Sigmoid colon (tissue), 7 donors: ENCODE measurements at regions of chr6 and their contacts with region 1.

Region 1: DNA sequence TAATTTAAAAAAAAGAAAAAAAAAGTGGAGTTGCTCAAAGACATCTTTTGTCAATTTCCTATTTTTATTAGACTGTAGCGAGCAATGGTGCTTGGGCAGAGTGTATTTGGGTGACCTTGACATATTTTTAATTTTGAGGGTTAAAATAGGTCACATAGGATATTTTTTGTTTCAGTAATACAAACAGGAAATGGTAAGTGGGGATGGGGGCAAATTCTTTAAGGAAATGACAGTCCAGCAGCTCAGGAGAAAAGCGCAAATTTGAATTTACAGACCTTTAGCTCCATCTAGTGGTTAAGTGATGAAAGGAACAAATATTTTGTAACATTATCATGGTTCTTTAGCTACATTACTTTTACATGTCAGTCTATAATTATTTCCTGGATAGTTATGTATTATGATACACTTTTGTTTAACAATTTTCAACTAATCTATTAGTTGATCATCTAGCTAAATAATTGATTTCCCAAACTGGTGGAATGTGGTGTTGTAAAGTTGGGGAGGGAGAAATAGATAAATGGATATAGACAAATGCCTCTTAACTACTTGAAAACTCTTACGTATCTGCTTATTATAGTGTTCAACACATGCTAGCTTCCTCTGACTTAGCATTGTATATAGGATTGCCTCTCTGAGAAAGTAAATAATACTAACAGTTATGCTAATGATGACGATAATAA is 10.0 kb downstream of the CITED2 start:
- DNase-seq: no peak
- H3K4me3 ChIP-seq: no peak overlapping the region
- H3K27ac ChIP-seq: no peak overlapping the region
- H3K4me1 ChIP-seq: peaks cover 0 to 11% (median 6%) of the 10 kb centered on the region in 4 donors
- H3K27me3 ChIP-seq: no peaks in the 10 kb centered on the region
- CTCF ChIP-seq: peak; percentile 59 to 77 (median 69)
- EP300 ChIP-seq: no peak
- POLR2A ChIP-seq: no peak

Region 2: GRCh38 chr6:138588805-138589434 is 775.5 kb before region 1 on chr6:
- intact Hi-C with region 1: loop called (anchors 5 kb)
- DNase-seq: peak; percentile 70
- H3K4me3 ChIP-seq: no peak overlapping the region
- H3K27ac ChIP-seq: no peak overlapping the region
- H3K4me1 ChIP-seq: peaks cover 0 to 6% (median 0%) of the 10 kb centered on the region in 4 donors
- H3K27me3 ChIP-seq: no peaks in the 10 kb centered on the region
- CTCF ChIP-seq: peak; percentile 76 to 92 (median 86)
- EP300 ChIP-seq: no peak
- POLR2A ChIP-seq: no peak

Region 3: DNA sequence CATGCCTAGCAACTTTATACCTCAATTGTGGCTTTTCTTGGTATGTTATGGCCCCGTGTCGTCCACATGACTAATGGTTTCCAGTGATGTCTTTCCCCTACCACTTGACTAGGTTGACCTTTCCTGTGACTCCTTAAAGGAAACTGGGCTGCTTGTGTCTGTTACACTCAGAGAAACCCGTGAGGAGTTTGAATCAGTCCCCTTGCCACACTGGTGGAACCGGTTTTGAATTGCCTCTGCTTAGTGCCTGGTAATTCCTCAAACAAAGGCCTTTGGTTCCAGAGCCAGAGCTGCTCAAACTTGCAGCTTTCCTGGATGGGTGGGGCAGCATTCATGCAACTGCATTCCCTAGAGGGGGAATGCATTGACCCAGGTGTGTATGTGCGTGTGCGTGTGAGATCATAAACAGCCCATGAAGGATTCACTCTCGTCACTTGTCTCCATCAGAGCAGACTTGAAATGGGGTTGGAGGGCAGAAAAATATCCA is 546.6 kb before region 1 on chr6:
- intact Hi-C with region 1: loop called (anchors 2 kb)
- DNase-seq: no peak
- H3K4me3 ChIP-seq: no peak overlapping the region
- H3K27ac ChIP-seq: no peak overlapping the region
- H3K4me1 ChIP-seq: peaks cover 0 to 6% (median 0%) of the 10 kb centered on the region in 4 donors
- H3K27me3 ChIP-seq: no peaks in the 10 kb centered on the region
- CTCF ChIP-seq: no peak
- EP300 ChIP-seq: no peak
- POLR2A ChIP-seq: no peak

Region 4: GRCh38 chr6:139219271-139219729 is 145.1 kb before region 1 on chr6:
- intact Hi-C with region 1: loop called (anchors 1 kb)
- DNase-seq: peak; percentile 89
- H3K4me3 ChIP-seq: no peak overlapping the region
- H3K27ac ChIP-seq: peak overlapping the region in 3 of 4 donors; percentile 25 to 53 (median 40)
- H3K4me1 ChIP-seq: peaks cover 0 to 6% (median 2%) of the 10 kb centered on the region in 4 donors
- H3K27me3 ChIP-seq: no peaks in the 10 kb centered on the region
- CTCF ChIP-seq: peak; percentile 56 to 72 (median 66)
- EP300 ChIP-seq: no peak
- POLR2A ChIP-seq: no peak

Region 5: DNA sequence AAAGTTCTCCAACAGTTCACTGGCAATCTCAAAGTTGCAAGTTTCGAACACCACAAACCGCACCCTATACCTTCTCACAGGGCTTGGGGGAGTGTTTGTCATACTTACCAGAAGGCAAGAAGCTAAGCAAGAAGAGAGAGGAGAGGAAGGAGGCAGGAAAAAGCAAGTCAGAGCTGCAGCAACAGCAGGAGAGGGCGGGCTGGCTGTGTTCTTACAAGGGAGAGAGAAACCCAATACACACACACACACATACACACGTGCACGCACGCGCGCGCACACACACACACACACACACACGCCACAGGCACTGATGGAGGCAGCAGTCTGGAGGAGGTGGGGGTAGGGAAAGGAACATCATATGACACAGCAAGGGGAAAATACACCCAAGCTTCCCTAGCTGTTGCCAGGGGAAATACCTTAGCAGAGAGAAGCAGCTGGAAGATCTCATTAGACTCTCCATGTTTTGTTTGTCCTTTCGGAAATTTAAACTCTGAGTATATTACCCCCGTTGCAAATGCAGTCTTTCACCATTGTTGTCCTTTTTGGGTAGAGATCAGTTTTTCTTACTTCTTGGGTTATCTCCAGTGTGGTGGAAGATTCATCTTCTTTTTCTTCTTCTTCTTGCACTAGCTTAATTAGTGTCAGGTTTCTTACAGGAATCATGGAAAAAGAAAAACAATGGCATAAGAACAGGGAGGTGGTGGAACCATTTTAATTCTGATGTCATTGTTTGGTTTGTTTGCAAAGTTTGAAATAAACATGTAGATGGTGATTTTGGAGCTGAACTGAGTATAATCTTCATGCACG is 72.4 kb before region 1 on chr6 and contains the start of gene TXLNB:
- intact Hi-C with region 1: loop called (anchors 5 kb)
- DNase-seq: peak; percentile 95
- H3K4me3 ChIP-seq: peak within 1 kb of the TSS in 3 of 4 donors; percentile 17 to 28 (median 28)
- H3K27ac ChIP-seq: peak within 1 kb of the TSS; percentile 67 to 78 (median 76)
- H3K4me1 ChIP-seq: peaks cover 0 to 28% (median 21%) of the 10 kb centered on the region in 4 donors
- H3K27me3 ChIP-seq: no peaks in the 10 kb centered on the region
- CTCF ChIP-seq: no peak
- EP300 ChIP-seq: peak in 1 of 4 donors; percentile 79
- POLR2A ChIP-seq: no peak
- total RNA-seq, gene TXLNB: 0.95 to 3.9 (median 2.7) TPM

Region 6: GRCh38 chr6:139625081-139625939 is 260.9 kb after region 1 on chr6:
- intact Hi-C with region 1: no loop called
- DNase-seq: no peak
- H3K4me3 ChIP-seq: no peak overlapping the region
- H3K27ac ChIP-seq: no peak overlapping the region
- H3K4me1 ChIP-seq: peaks cover 0 to 10% (median 7%) of the 10 kb centered on the region in 4 donors
- H3K27me3 ChIP-seq: no peaks in the 10 kb centered on the region
- CTCF ChIP-seq: no peak
- EP300 ChIP-seq: no peak
- POLR2A ChIP-seq: no peak